ENCODE measurements at regions of chr4 and their contacts with region 1.

Region 1: DNA sequence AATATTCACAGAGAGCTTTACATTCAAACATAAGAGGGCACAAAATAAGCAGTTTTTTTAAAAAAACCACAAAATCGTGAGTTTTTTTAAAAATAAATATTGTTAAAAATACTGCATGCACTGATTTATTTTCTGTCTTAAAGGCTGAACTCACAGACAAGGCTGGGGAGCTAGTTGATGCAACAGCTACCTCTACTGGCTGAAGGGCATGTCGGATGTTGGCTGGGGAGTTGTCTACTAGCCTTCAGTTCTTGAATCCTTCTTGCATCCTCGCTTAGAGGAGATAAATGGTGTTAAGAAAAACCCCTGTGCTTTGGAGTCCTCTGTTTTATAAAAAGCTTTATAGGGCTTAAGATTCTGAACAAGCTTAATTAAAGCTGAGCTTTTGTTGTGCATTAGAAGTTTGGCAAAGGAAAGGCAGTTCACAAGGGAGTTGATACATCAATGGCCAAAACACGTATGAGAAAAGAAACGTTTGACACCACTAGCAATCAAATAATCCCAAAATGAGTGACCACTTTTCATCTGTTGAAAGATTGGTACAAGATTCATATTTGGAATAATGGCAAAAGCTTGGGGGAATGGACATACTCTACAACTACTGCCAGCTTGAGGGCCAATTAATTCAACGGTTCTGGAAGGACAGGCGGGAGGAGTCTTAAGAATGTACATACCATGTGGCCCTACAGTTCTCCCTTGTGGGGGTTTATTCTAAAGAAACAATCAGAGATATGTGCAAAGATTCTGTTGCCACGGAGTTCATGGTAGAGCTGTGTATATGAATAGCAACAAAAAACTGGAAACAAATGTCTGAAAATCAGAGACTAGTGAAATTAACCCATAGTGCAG is 94.7 kb downstream of the SEL1L3 start:
- DNase-seq: peak; percentile 45 to 74
- H3K4me3 ChIP-seq: no peak overlapping the region
- H3K4me1 ChIP-seq: no peaks in the 10 kb centered on the region; the same call in 1 of the 2 replicates
- H3K27me3 ChIP-seq: no peaks in the 10 kb centered on the region

Region 2: GRCh38 chr4:25439918-25440477 is 328.1 kb before region 1 on chr4:
- in situ Hi-C with region 1: loop called (anchors 10 kb)
- DNase-seq: peak; percentile 66 to 83
- H3K4me3 ChIP-seq: no peak overlapping the region
- H3K4me1 ChIP-seq: no peaks in the 10 kb centered on the region
- H3K27me3 ChIP-seq: 0 out of 2 replicates have a peak, but pooled peaks cover 3% of the 10 kb centered on the region

Measured in HAP-1 (cell line).